Activated CD8-positive, alpha-beta T cell treated with anti-CD3 and anti-CD28 coated beads, Interleukin-2, amount 10 ng/mL, durations not matched to agents 7 days and 5 days (primary cell): ENCODE measurements at regions of chr7 and their contacts with region 1.

Region 1: GRCh38 chr7:150481186-150481920 is 30.9 kb downstream of the GIMAP8 start:
- DNase-seq: peak; percentile 78
- ATAC-seq: peak; percentile 70
- H3K4me3 Mint-ChIP-seq: peak overlapping the region; percentile 75
- H3K27ac Mint-ChIP-seq: peak overlapping the region; percentile 99
- H3K4me1 Mint-ChIP-seq: peaks cover 87% of the 10 kb centered on the region
- H3K27me3 Mint-ChIP-seq: no peaks in the 10 kb centered on the region

Region 2: DNA sequence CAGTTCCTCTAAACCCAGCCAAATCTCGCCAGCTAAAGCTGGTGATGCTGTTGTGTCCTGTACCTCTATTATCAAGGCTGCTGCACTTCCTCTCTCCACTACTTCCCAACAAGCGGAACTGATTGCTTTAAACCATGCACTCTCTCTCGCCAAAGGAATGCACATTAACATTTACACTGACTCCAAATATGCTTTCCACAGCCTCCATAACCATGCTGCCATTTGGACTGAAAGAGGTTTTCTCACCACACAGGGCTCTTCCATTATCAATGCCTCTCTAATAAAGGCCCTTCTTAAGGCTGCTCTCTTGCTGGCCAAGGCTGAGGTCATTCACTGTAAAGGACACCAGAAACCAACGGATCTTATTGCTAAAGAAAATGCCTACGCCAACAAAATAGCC is 169.6 kb before region 1 on chr7:
- CTCF ChIA-PET with region 1: no interaction called
- POLR2A ChIA-PET with region 1: no interaction called
- DNase-seq: no peak
- ATAC-seq: no peak
- H3K4me3 Mint-ChIP-seq: no peak overlapping the region
- H3K27ac Mint-ChIP-seq: no peak overlapping the region
- H3K4me1 Mint-ChIP-seq: peaks cover 3% of the 10 kb centered on the region
- H3K27me3 Mint-ChIP-seq: no peaks in the 10 kb centered on the region

Region 3: DNA sequence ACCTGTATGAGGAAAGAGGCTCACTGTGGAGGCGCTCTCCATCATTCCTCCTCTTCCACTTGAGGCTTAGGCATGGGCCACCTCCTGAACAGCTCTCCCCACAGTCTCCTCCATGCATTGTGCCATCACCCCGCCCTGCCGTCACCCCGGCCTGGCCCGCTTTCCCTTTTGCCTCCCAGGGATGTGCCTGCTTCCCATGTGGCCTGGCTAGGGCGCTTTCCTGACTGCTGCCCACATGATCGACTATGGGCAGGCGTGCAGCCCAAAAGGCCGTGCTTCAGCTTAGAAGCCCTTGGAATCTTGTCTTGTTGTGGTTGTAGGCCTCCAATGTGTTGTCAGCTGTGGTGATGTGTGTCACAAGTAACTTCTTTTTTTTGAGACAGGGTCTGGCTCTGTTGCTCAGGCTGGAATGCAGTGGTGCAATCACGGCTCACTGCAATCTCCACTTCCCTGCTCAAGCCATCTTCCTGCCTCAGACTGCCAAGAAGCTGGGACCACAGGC is 156.2 kb before region 1 on chr7:
- CTCF ChIA-PET with region 1: no interaction called
- POLR2A ChIA-PET with region 1: no interaction called
- DNase-seq: no peak
- ATAC-seq: no peak
- H3K4me3 Mint-ChIP-seq: peak overlapping the region; percentile 91
- H3K27ac Mint-ChIP-seq: peak overlapping the region; percentile 97
- H3K4me1 Mint-ChIP-seq: peaks cover 30% of the 10 kb centered on the region
- H3K27me3 Mint-ChIP-seq: no peaks in the 10 kb centered on the region

Region 4: DNA sequence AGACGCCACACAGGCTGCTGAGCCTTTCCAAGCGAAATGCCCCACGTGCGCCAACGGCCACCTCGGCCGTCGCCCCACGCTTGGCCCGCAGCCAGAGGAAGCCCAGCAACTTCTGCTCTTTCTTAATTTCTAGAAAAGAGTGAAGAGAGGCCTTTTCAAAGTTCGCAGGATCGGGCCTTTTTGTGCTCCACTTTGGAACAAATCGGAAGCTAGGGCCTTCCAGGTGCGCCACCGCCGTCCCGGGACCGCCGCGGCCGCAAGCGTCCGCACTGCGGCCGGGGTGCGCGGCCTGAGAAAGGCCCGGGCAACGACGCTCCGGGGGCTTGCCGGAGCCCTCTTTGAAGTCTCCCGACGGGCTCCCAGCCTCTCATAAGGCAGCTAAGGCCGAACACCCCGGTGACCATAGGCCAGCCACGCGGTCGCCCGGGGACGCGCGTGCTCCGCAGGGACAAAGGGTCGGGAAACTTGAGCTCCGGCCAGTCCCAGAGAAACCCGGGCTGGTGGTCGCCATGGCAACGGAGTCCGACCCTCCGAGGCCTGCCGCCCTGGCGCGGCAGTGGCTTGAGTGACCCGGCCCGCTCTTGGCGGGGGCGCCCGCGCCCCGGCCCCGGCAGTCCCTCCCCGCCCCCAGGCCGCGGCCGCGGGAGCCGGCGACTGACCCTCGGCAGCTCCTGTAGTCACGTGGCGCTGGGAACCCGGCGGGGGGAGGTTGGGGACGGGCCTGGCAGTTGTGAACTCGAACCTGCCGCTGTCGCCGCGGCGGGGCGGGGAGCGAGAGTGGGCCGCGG is 113.1 kb before region 1 on chr7 and contains the start of gene REPIN1:
- CTCF ChIA-PET with region 1: no interaction called
- POLR2A ChIA-PET with region 1: no interaction called
- DNase-seq: peak; percentile 83
- ATAC-seq: peak; percentile 73
- H3K4me3 Mint-ChIP-seq: peak within 1 kb of the TSS; percentile 96
- H3K27ac Mint-ChIP-seq: peak within 1 kb of the TSS; percentile 91
- H3K4me1 Mint-ChIP-seq: peaks cover 46% of the 10 kb centered on the region
- H3K27me3 Mint-ChIP-seq: no peaks in the 10 kb centered on the region
- total RNA-seq, gene REPIN1: 40.9 to 43.1 TPM

Region 5: GRCh38 chr7:150388709-150389531 is 92.4 kb before region 1 on chr7:
- CTCF ChIA-PET with region 1: no interaction called
- POLR2A ChIA-PET with region 1: no interaction called
- DNase-seq: no peak
- ATAC-seq: no peak
- H3K4me3 Mint-ChIP-seq: no peak overlapping the region
- H3K27ac Mint-ChIP-seq: no peak overlapping the region
- H3K4me1 Mint-ChIP-seq: peaks cover 9% of the 10 kb centered on the region
- H3K27me3 Mint-ChIP-seq: no peaks in the 10 kb centered on the region

Region 6: GRCh38 chr7:150465414-150465813 is 15.9 kb before region 1 on chr7:
- CTCF ChIA-PET with region 1: interaction called, 6 read pairs
- POLR2A ChIA-PET with region 1: interaction called, 10 read pairs
- DNase-seq: no peak
- ATAC-seq: no peak
- H3K4me3 Mint-ChIP-seq: no peak overlapping the region
- H3K27ac Mint-ChIP-seq: peak overlapping the region; percentile 31
- H3K4me1 Mint-ChIP-seq: peaks cover 81% of the 10 kb centered on the region
- H3K27me3 Mint-ChIP-seq: no peaks in the 10 kb centered on the region

Region 7: DNA sequence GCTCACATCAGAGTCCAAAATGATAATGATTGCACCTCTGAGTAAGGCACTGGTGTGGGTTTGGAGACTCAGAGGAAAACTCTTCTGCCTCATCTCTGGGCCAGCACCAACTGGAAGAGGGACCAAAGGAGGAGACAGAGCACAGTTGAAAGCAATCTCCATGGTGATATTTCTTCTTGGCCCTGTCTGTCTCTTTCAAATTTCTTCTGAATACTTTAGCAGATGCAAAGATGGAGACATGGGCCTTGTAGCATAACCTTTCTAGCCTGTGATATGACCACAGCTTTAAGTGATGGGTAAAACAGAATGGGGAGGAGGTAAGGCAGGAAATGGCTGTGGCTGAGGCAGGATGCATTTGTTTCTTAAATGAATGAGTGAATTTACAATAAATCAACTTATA is 21.2 kb after region 1 on chr7:
- CTCF ChIA-PET with region 1: interaction called, 45 read pairs
- POLR2A ChIA-PET with region 1: interaction called, 23 read pairs
- DNase-seq: peak; percentile 77
- ATAC-seq: peak; percentile 91
- H3K4me3 Mint-ChIP-seq: peak overlapping the region; percentile 53
- H3K27ac Mint-ChIP-seq: peak overlapping the region; percentile 95
- H3K4me1 Mint-ChIP-seq: peaks cover 80% of the 10 kb centered on the region
- H3K27me3 Mint-ChIP-seq: no peaks in the 10 kb centered on the region